Lower leg skin (tissue), 4 donors: ENCODE measurements at regions of chrX and their contacts with region 1.

Region 1: GRCh38 chrX:19887911-19888879 is 795 bp upstream of the SH3KBP1 start:
- DNase-seq: peak; percentile 21 to 87
- H3K4me3 ChIP-seq: no peak overlapping the region
- CTCF ChIP-seq: no peak
- POLR2A ChIP-seq: no peak

Region 2: GRCh38 chrX:19544693-19545305 is 343.4 kb before region 1 on chrX:
- intact Hi-C with region 1: loop called (anchors 10 kb)
- DNase-seq: peak; percentile 15 to 36
- H3K4me3 ChIP-seq: no peak overlapping the region
- CTCF ChIP-seq: no peak
- POLR2A ChIP-seq: no peak

Region 3: GRCh38 chrX:19728915-19729314 is 159.3 kb before region 1 on chrX:
- intact Hi-C with region 1: no loop called
- DNase-seq: no peak
- H3K4me3 ChIP-seq: no peak overlapping the region
- CTCF ChIP-seq: no peak
- POLR2A ChIP-seq: no peak

Region 4: GRCh38 chrX:19990556-19991349 is 102.6 kb after region 1 on chrX and contains the start of gene BCLAF3:
- intact Hi-C with region 1: no loop called
- DNase-seq: peak; percentile 68 to 96
- H3K4me3 ChIP-seq: peak within 1 kb of the TSS; percentile 38
- CTCF ChIP-seq: no peak
- POLR2A ChIP-seq: no peak
- total RNA-seq, gene BCLAF3: 5.7 to 9.4 (median 5.9) TPM

Region 5: GRCh38 chrX:20531667-20532066 is 643.5 kb after region 1 on chrX:
- intact Hi-C with region 1: no loop called
- DNase-seq: no peak
- H3K4me3 ChIP-seq: no peak overlapping the region
- CTCF ChIP-seq: no peak
- POLR2A ChIP-seq: no peak

Region 6: GRCh38 chrX:21193196-21193595 is 1305.0 kb after region 1 on chrX:
- intact Hi-C with region 1: no loop called
- DNase-seq: no peak
- H3K4me3 ChIP-seq: no peak overlapping the region
- CTCF ChIP-seq: no peak
- POLR2A ChIP-seq: no peak